CD8-positive, alpha-beta T cell (primary cell): ENCODE measurements at regions of chr16 and their contacts with region 1.

Region 1: GRCh38 chr16:56643080-56643778 is 4.8 kb downstream of the MT1A start:
- DNase-seq: peak; percentile 52 to 92 (median 77)
- ATAC-seq: peak; percentile 99
- H3K4me3 ChIP-seq: peak overlapping the region; percentile 33 to 47
- H3K4me3 Mint-ChIP-seq: peak overlapping the region; percentile 71
- H3K27ac ChIP-seq: peak overlapping the region in 1 of 2 experiments; percentile 3
- H3K27ac Mint-ChIP-seq: no peak overlapping the region
- H3K4me1 ChIP-seq: peaks cover 11% of the 10 kb centered on the region
- H3K4me1 Mint-ChIP-seq: peaks cover 23% of the 10 kb centered on the region
- H3K27me3 ChIP-seq: peaks cover 3 to 5% of the 10 kb centered on the region in 2 experiments
- H3K27me3 Mint-ChIP-seq: peaks cover 23% of the 10 kb centered on the region
- CTCF ChIP-seq: peak; percentile 19

Region 2: GRCh38 chr16:56532714-56533113 is 110.5 kb before region 1 on chr16:
- CTCF ChIA-PET with region 1: no interaction called
- POLR2A ChIA-PET with region 1: no interaction called
- intact Hi-C with region 1: no loop called
- DNase-seq: no peak
- ATAC-seq: no peak
- H3K4me3 ChIP-seq: no peak overlapping the region
- H3K4me3 Mint-ChIP-seq: no peak overlapping the region
- H3K27ac ChIP-seq: no peak overlapping the region
- H3K27ac Mint-ChIP-seq: no peak overlapping the region
- H3K4me1 ChIP-seq: no peaks in the 10 kb centered on the region
- H3K4me1 Mint-ChIP-seq: no peaks in the 10 kb centered on the region
- H3K27me3 ChIP-seq: no peaks in the 10 kb centered on the region
- H3K27me3 Mint-ChIP-seq: peaks cover 18% of the 10 kb centered on the region
- CTCF ChIP-seq: no peak

Region 3: GRCh38 chr16:56657555-56658326 is 14.5 kb after region 1 on chr16 and contains the start of gene MT1F:
- CTCF ChIA-PET with region 1: interaction called, 4 read pairs
- POLR2A ChIA-PET with region 1: interaction called, 5 read pairs
- intact Hi-C with region 1: loop called in 1 of 2 experiments (anchors 1 kb)
- DNase-seq: peak; percentile 32 to 86 (median 73)
- ATAC-seq: peak; percentile 78
- H3K4me3 ChIP-seq: peak within 1 kb of the TSS; percentile 68 to 70
- H3K4me3 Mint-ChIP-seq: peak within 1 kb of the TSS; percentile 97
- H3K27ac ChIP-seq: peak within 1 kb of the TSS; percentile 44 to 69
- H3K27ac Mint-ChIP-seq: peak within 1 kb of the TSS; percentile 94
- H3K4me1 ChIP-seq: peaks cover 20% of the 10 kb centered on the region
- H3K4me1 Mint-ChIP-seq: peaks cover 27% of the 10 kb centered on the region
- H3K27me3 ChIP-seq: no peaks in the 10 kb centered on the region
- H3K27me3 Mint-ChIP-seq: peaks cover 3% of the 10 kb centered on the region
- CTCF ChIP-seq: no peak
- total RNA-seq, gene MT1F: 5.6 to 7.4 TPM

Region 4: GRCh38 chr16:56841233-56841632 is 198.0 kb after region 1 on chr16:
- CTCF ChIA-PET with region 1: no interaction called
- POLR2A ChIA-PET with region 1: no interaction called
- intact Hi-C with region 1: no loop called
- DNase-seq: no peak
- ATAC-seq: no peak
- H3K4me3 ChIP-seq: no peak overlapping the region
- H3K4me3 Mint-ChIP-seq: no peak overlapping the region
- H3K27ac ChIP-seq: no peak overlapping the region
- H3K27ac Mint-ChIP-seq: no peak overlapping the region
- H3K4me1 ChIP-seq: no peaks in the 10 kb centered on the region
- H3K4me1 Mint-ChIP-seq: peaks cover 19% of the 10 kb centered on the region
- H3K27me3 ChIP-seq: no peaks in the 10 kb centered on the region
- H3K27me3 Mint-ChIP-seq: no peaks in the 10 kb centered on the region
- CTCF ChIP-seq: no peak

Region 5: DNA sequence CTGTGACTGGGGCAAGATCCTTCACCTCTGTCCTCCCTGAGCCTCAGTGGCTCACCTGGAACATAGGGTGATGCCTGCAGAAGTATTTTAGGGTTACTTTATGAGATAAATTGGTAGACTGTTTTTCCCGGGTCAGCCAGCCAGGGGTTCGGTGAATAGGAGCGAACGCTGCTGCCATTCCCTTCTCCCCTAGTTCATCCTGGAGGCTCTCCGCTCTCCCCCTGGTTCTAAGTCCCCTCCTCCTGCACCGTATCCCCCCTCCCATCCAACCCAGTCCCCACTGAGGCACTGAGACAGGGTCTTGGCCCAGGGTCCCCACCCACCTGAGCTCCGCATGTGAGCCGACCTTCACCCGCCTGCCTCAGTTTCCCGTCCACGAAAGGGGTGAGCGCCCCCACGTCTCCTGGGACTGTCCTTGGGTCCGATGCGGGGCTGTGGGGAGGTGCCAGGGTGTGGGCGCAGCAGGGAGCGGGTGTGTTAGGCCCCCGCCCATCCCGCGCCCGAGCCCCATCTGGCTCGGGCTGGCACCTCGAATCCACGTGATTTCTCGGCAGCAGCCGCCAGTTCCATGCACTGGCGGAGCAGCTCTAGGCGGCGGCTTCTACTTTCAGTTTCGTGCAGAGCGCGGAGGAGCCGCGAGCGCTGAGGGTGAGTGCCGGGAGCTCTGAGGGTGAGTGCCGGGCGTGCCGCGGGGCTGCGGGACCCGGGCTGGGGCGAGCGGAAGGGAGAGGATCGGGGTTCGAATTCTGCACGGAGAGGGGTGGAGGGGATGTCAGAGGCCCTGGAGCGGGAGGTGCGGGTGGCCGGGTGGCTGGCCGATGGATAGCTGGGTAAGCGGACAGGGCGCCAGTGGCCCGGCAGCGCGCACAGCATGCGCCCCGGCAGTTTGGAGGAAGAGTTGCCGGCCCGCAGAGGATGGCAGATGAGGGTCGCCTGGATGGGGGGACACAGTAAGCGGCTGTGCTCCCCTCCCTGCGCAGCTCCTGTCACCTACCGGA is 346.0 kb after region 1 on chr16 and contains the start of gene NLRC5:
- CTCF ChIA-PET with region 1: no interaction called
- POLR2A ChIA-PET with region 1: no interaction called
- intact Hi-C with region 1: no loop called
- DNase-seq: peak; percentile 79 to 95 (median 89)
- ATAC-seq: peak; percentile 81
- H3K4me3 ChIP-seq: peak within 1 kb of the TSS; percentile 98
- H3K4me3 Mint-ChIP-seq: peak within 1 kb of the TSS; percentile 100
- H3K27ac ChIP-seq: peak within 1 kb of the TSS; percentile 90 to 92
- H3K27ac Mint-ChIP-seq: peak within 1 kb of the TSS; percentile 98
- H3K4me1 ChIP-seq: peaks cover 70% of the 10 kb centered on the region
- H3K4me1 Mint-ChIP-seq: peaks cover 74% of the 10 kb centered on the region
- H3K27me3 ChIP-seq: no peaks in the 10 kb centered on the region
- H3K27me3 Mint-ChIP-seq: no peaks in the 10 kb centered on the region
- CTCF ChIP-seq: no peak
- total RNA-seq, gene NLRC5: 670 to 690 TPM